Activated CD4-positive, alpha-beta T cell treated with anti-CD3 and anti-CD28 coated beads, Interleukin-2, amount 10 ng/mL, durations not matched to agents 24 days and 14 days (primary cell): ENCODE measurements at regions of chr1 and their contacts with region 1.

Region 1: DNA sequence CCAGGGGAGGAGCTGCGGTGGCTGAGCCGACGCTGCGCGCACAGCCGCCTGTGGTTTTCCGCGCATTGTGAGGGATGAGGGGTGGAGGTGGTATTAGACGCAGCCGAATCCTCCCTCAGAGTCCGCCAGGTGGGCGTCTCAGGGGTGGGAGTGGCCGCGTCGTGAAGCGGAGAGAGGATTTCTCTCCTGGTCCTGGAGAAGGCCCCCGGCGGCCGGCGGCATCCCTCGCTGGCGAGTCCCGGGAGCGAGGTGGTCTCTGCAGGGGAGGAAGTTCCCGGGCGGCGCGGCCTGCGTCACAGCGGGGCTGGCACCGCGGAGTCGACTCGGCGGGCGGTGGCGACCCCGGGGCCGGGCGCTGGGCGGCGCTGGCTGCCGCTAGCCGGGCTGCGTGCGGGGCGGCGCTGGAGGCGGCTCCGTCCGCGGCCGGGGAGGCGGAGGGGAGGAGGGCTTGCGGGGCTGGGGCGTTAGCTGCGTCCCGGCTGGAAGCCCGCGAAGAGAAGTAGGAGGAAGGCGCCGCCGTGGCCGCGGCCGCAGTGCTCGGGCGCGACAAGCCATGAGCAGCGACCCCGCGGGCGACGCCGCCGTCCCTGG is at the start of gene LRRC8C:
- DNase-seq: peak; percentile 97
- H3K4me3 Mint-ChIP-seq: peak within 1 kb of the TSS; percentile 96
- H3K27ac Mint-ChIP-seq: peak within 1 kb of the TSS; percentile 95
- H3K4me1 Mint-ChIP-seq: peaks cover 61% of the 10 kb centered on the region
- H3K27me3 Mint-ChIP-seq: no peaks in the 10 kb centered on the region
- total RNA-seq, gene LRRC8C: 73.1 and 74.0 TPM in 2 replicates

Region 2: DNA sequence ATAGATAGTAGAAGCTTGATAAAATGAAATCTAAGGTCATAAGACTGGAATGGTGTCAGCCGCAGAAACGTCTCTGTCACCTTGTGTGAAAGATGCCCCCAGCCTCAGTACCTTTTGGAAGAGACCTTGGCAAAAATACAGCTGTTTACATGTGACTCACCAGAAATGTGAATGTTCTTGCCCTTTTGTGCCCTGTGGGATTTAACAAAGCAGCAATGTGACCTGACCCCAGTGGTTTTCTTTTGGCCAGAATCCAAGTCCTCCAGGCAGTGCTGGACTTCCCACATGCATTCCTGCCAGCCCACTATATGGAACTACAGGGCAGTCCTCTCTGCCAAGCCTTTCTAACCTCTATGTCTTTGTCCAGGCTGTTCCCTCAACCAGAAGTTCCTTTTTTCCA is 27.1 kb before region 1 on chr1:
- intact Hi-C with region 1: loop called (anchors 1 kb)
- DNase-seq: no peak
- H3K4me3 Mint-ChIP-seq: peak overlapping the region; percentile 64
- H3K27ac Mint-ChIP-seq: peak overlapping the region; percentile 99
- H3K4me1 Mint-ChIP-seq: peaks cover 86% of the 10 kb centered on the region
- H3K27me3 Mint-ChIP-seq: no peaks in the 10 kb centered on the region

Region 3: GRCh38 chr1:89657886-89658285 is 25.1 kb after region 1 on chr1:
- intact Hi-C with region 1: loop called (anchors 1 kb)
- DNase-seq: peak; percentile 83
- H3K4me3 Mint-ChIP-seq: peak overlapping the region; percentile 40
- H3K27ac Mint-ChIP-seq: peak overlapping the region; percentile 79
- H3K4me1 Mint-ChIP-seq: peaks cover 70% of the 10 kb centered on the region
- H3K27me3 Mint-ChIP-seq: no peaks in the 10 kb centered on the region

Region 4: GRCh38 chr1:89687254-89687653 is 54.5 kb after region 1 on chr1:
- intact Hi-C with region 1: loop called (anchors 2 kb)
- DNase-seq: no peak
- H3K4me3 Mint-ChIP-seq: no peak overlapping the region
- H3K27ac Mint-ChIP-seq: peak overlapping the region; percentile 3
- H3K4me1 Mint-ChIP-seq: peaks cover 49% of the 10 kb centered on the region
- H3K27me3 Mint-ChIP-seq: no peaks in the 10 kb centered on the region

Region 5: GRCh38 chr1:89762779-89763648 is 130.3 kb after region 1 on chr1:
- intact Hi-C with region 1: loop called (anchors 1 kb)
- DNase-seq: peak; percentile 96
- H3K4me3 Mint-ChIP-seq: peak overlapping the region; percentile 91
- H3K27ac Mint-ChIP-seq: peak overlapping the region; percentile 96
- H3K4me1 Mint-ChIP-seq: peaks cover 53% of the 10 kb centered on the region
- H3K27me3 Mint-ChIP-seq: no peaks in the 10 kb centered on the region

Region 6: GRCh38 chr1:89994805-89995597 is 362.2 kb after region 1 on chr1 and contains the start of gene ZNF326:
- intact Hi-C with region 1: loop called (anchors 2 kb)
- DNase-seq: peak; percentile 99
- H3K4me3 Mint-ChIP-seq: peak within 1 kb of the TSS; percentile 94
- H3K27ac Mint-ChIP-seq: peak within 1 kb of the TSS; percentile 98
- H3K4me1 Mint-ChIP-seq: peaks cover 35% of the 10 kb centered on the region
- H3K27me3 Mint-ChIP-seq: peaks cover 6% of the 10 kb centered on the region
- total RNA-seq, gene ZNF326: 36.8 and 38.1 TPM in 2 replicates